ENCODE measurements at regions of chr2 and their contacts with region 1.

Region 1: GRCh38 chr2:137910641-137911040 is 53.6 kb upstream of the HNMT start:
- DNase-seq: peak; percentile 29

Region 2: DNA sequence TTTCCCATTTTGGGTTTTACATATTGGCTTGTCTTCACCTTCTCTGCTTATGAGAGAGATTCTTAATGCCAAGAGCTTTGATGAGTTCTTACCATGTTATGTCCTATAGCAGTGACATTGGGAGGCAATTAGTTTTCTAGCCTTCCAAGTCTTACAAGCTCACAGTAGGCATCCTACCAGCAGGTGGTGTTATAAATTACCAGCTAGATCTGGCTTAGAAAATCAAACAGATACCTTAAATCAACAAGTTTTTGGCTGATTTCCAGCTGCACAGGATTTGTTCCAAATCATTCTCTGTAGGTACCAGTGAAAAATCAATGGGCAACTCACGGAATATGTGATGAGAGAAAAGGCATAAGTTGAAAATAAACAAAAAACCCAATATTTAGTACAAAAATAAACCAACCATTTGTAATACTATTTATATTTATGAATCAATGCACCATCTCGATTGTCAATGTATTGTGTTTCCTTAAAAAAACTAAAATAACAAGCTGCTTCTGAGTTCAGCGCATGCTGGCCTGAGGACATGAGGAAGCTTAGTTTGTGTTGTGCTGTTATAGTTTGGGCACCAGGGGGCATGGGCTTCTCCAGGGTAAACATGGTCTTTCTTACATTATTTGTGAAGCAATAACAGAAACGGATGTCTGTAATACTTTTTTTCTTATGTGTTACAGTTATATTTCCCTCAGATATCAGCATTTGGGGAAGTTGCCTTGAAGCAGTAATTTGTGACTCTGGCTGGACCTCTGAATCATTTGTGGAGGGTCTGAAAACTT is 903.7 kb after region 1 on chr2:
- in situ Hi-C with region 1: loop called (anchors 25 kb)
- DNase-seq: no peak